Endothelial cell of umbilical vein (primary cell): ENCODE measurements at regions of chr3 and their contacts with region 1.

Region 1: GRCh38 chr3:45507820-45508317 is 86.7 kb upstream of the LIMD1 start:
- DNase-seq: peak; percentile 53
- H3K4me3 ChIP-seq: no peak overlapping the region
- H3K27ac ChIP-seq: no peak overlapping the region
- H3K4me1 ChIP-seq: peaks cover 8% of the 10 kb centered on the region
- H3K27me3 ChIP-seq: no peaks in the 10 kb centered on the region
- CTCF ChIP-seq: peak; percentile 29 to 70
- POLR2A ChIP-seq: no peak

Region 2: GRCh38 chr3:45037734-45038455 is 470.0 kb before region 1 on chr3:
- CTCF ChIA-PET with region 1: interaction called, 31 read pairs
- POLR2A ChIA-PET with region 1: no interaction called
- dilution Hi-C with region 1: loop called (anchors 25 kb)
- intact Hi-C with region 1: no loop called
- DNase-seq: peak; percentile 95
- H3K4me3 ChIP-seq: no peak overlapping the region
- H3K27ac ChIP-seq: no peak overlapping the region
- H3K4me1 ChIP-seq: no peaks in the 10 kb centered on the region
- H3K27me3 ChIP-seq: no peaks in the 10 kb centered on the region
- CTCF ChIP-seq: peak; percentile 94 to 95
- POLR2A ChIP-seq: no peak

Region 3: GRCh38 chr3:45491344-45491743 is 16.5 kb before region 1 on chr3:
- CTCF ChIA-PET with region 1: no interaction called
- POLR2A ChIA-PET with region 1: no interaction called
- dilution Hi-C with region 1: no loop called
- intact Hi-C with region 1: no loop called
- DNase-seq: no peak
- H3K4me3 ChIP-seq: no peak overlapping the region
- H3K27ac ChIP-seq: no peak overlapping the region
- H3K4me1 ChIP-seq: no peaks in the 10 kb centered on the region
- H3K27me3 ChIP-seq: no peaks in the 10 kb centered on the region
- CTCF ChIP-seq: no peak
- POLR2A ChIP-seq: no peak

Region 4: GRCh38 chr3:45546716-45547701 is 39.1 kb after region 1 on chr3:
- CTCF ChIA-PET with region 1: interaction called, 27 read pairs
- POLR2A ChIA-PET with region 1: no interaction called
- dilution Hi-C with region 1: no loop called
- intact Hi-C with region 1: loop called (anchors 5 kb)
- DNase-seq: no peak
- H3K4me3 ChIP-seq: no peak overlapping the region
- H3K27ac ChIP-seq: no peak overlapping the region
- H3K4me1 ChIP-seq: peaks cover 26% of the 10 kb centered on the region
- H3K27me3 ChIP-seq: no peaks in the 10 kb centered on the region
- CTCF ChIP-seq: peak; percentile 46 to 56
- POLR2A ChIP-seq: no peak

Region 5: GRCh38 chr3:45665101-45665572 is 157.3 kb after region 1 on chr3:
- CTCF ChIA-PET with region 1: interaction called, 109 read pairs
- POLR2A ChIA-PET with region 1: interaction called, 12 read pairs
- dilution Hi-C with region 1: no loop called
- intact Hi-C with region 1: loop called (anchors 1 kb)
- DNase-seq: peak; percentile 78
- H3K4me3 ChIP-seq: no peak overlapping the region
- H3K27ac ChIP-seq: peak overlapping the region; percentile 70
- H3K4me1 ChIP-seq: peaks cover 49% of the 10 kb centered on the region
- H3K27me3 ChIP-seq: no peaks in the 10 kb centered on the region
- CTCF ChIP-seq: peak; percentile 61 to 73
- POLR2A ChIP-seq: no peak

Region 6: DNA sequence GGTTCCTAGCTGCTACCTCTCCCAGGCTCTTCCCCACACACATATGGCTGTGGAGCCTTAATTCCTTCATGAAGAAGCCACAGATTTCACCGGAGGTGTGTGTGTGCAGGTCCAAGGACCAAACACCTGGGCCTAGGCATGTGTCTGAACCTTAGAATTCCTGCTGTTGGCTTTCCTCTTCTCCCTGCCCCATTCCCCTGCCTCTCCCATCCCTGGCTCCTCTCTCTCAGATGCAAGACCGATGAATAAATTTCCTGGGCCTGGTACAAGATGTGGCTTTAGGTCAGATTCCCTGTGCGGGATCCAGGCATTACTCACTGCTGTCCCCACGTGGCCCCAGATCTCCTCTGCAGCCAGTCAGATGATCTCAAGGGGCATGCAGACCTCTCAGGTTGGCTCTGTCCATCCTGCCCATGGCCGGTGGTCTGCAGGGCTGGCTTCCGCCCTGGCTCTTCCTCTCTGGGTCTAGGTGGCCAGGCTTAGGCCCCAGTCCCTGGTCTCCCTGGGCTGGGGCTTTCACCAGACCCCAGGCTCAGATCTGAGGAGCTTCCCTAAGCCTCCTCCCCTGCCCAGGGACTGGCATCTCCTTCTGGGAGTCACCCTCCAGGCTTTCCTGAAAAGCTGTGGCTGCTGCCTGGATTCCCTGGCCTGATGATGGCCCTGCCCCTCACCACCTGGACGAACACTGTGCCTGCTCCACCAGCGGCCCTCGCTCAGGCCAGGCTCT is 399.0 kb after region 1 on chr3:
- CTCF ChIA-PET with region 1: interaction called, 7 read pairs
- POLR2A ChIA-PET with region 1: no interaction called
- dilution Hi-C with region 1: no loop called
- intact Hi-C with region 1: loop called (anchors 5 kb)
- DNase-seq: peak; percentile 24
- H3K4me3 ChIP-seq: no peak overlapping the region
- H3K27ac ChIP-seq: no peak overlapping the region
- H3K4me1 ChIP-seq: no peaks in the 10 kb centered on the region
- H3K27me3 ChIP-seq: no peaks in the 10 kb centered on the region
- CTCF ChIP-seq: peak; percentile 37 to 70
- POLR2A ChIP-seq: no peak

Region 7: GRCh38 chr3:45946307-45946706 is 438.4 kb after region 1 on chr3:
- CTCF ChIA-PET with region 1: no interaction called
- POLR2A ChIA-PET with region 1: no interaction called
- dilution Hi-C with region 1: no loop called
- intact Hi-C with region 1: no loop called
- DNase-seq: no peak
- H3K4me3 ChIP-seq: no peak overlapping the region
- H3K27ac ChIP-seq: no peak overlapping the region
- H3K4me1 ChIP-seq: no peaks in the 10 kb centered on the region
- H3K27me3 ChIP-seq: no peaks in the 10 kb centered on the region
- CTCF ChIP-seq: no peak
- POLR2A ChIP-seq: no peak